Activated B cell treated with CpG ODN at 0.5 μM for 24 hours (primary cell): ENCODE measurements at regions of chr2 and their contacts with region 1.

Region 1: GRCh38 chr2:200373973-200374416 is 67.5 kb downstream of the SPATS2L start:
- DNase-seq: no peak
- ATAC-seq: peak; percentile 92
- H3K4me3 Mint-ChIP-seq: peak overlapping the region; percentile 76
- H3K27ac Mint-ChIP-seq: no peak overlapping the region
- H3K4me1 Mint-ChIP-seq: peaks cover 14% of the 10 kb centered on the region
- H3K27me3 Mint-ChIP-seq: peaks cover 5% of the 10 kb centered on the region
- CTCF ChIP-seq: no peak

Region 2: GRCh38 chr2:200454927-200455801 is 81.2 kb after region 1 on chr2:
- CTCF ChIA-PET with region 1: no interaction called
- POLR2A ChIA-PET with region 1: no interaction called
- intact Hi-C with region 1: loop called (anchors 2 kb)
- DNase-seq: no peak
- ATAC-seq: no peak
- H3K4me3 Mint-ChIP-seq: no peak overlapping the region
- H3K27ac Mint-ChIP-seq: peak overlapping the region; percentile 60
- H3K4me1 Mint-ChIP-seq: peaks cover 49% of the 10 kb centered on the region
- H3K27me3 Mint-ChIP-seq: no peaks in the 10 kb centered on the region
- CTCF ChIP-seq: no peak